OCI-LY7 (cell line): ENCODE measurements at regions of chr17 and their contacts with region 1.

Region 1: GRCh38 chr17:32142038-32142856 is at the start of gene RHOT1:
- DNase-seq: peak; percentile 90
- H3K4me3 ChIP-seq: peak within 1 kb of the TSS; percentile 92
- H3K27ac ChIP-seq: peak within 1 kb of the TSS; percentile 55
- H3K4me1 ChIP-seq: peaks cover 24% of the 10 kb centered on the region
- CTCF ChIP-seq: peak; percentile 78
- total RNA-seq, gene RHOT1: 19.4 and 23.9 TPM in 2 replicates

Region 2: DNA sequence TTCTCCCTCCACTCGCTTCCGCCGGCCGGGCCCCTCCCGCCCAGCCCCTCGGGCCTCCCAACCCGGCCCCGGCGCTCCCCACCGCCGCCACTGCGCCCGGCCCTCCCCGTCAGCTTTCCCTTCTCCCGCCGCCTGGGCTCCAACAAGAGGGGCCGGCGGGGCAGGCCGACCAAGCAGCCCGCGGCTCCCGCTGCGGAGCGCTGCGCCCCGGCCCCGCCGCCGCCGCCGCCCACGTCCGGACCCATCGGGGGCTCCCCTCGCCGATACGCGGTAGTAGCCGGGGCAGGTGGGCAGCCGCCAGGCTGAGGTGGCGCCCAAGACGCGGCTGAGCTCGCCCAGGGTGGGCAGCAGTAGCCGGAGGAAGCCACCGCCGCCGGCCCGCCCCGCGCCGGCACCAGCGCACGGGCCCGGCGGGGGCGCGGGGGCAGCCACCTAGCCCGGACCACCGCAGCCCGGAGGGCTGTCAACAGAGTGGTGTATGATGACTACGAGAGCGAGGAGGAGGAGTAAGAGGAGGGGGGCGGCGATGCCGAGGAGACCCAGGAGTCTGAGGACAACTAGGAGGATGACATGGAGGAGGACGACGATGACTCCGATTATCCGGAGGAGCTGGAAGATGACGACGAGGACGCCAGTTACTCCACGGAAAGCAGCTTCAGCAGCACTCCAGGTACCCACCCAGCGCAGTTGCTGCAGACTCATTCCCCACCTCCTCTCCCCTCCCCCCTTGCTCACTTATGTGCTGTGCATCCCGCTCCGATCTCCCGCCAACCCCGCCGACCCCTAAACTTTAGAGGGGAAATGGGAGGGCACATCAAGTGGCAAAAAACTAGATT is 134.6 kb before region 1 on chr17:
- CTCF ChIA-PET with region 1: no interaction called
- POLR2A ChIA-PET with region 1: interaction called, 3 read pairs
- intact Hi-C with region 1: loop called (anchors 1 kb)
- DNase-seq: peak; percentile 59
- H3K4me3 ChIP-seq: peak overlapping the region; percentile 98
- H3K27ac ChIP-seq: peak overlapping the region; percentile 50
- H3K4me1 ChIP-seq: peaks cover 13% of the 10 kb centered on the region
- CTCF ChIP-seq: no peak

Region 3: GRCh38 chr17:32127158-32127897 is 14.9 kb before region 1 on chr17:
- CTCF ChIA-PET with region 1: interaction called, 4 read pairs
- POLR2A ChIA-PET with region 1: interaction called, 13 read pairs
- intact Hi-C with region 1: no loop called
- DNase-seq: peak; percentile 64
- H3K4me3 ChIP-seq: peak overlapping the region; percentile 70
- H3K27ac ChIP-seq: peak overlapping the region; percentile 28
- H3K4me1 ChIP-seq: peaks cover 12% of the 10 kb centered on the region
- CTCF ChIP-seq: no peak

Region 4: GRCh38 chr17:32166150-32166549 is 23.9 kb after region 1 on chr17:
- CTCF ChIA-PET with region 1: no interaction called
- POLR2A ChIA-PET with region 1: no interaction called
- intact Hi-C with region 1: no loop called
- DNase-seq: no peak
- H3K4me3 ChIP-seq: no peak overlapping the region
- H3K27ac ChIP-seq: no peak overlapping the region
- H3K4me1 ChIP-seq: no peaks in the 10 kb centered on the region
- CTCF ChIP-seq: no peak

Region 5: GRCh38 chr17:33086041-33086440 is 943.8 kb after region 1 on chr17:
- CTCF ChIA-PET with region 1: no interaction called
- POLR2A ChIA-PET with region 1: no interaction called
- intact Hi-C with region 1: no loop called
- DNase-seq: no peak
- H3K4me3 ChIP-seq: no peak overlapping the region
- H3K27ac ChIP-seq: no peak overlapping the region
- H3K4me1 ChIP-seq: no peaks in the 10 kb centered on the region
- CTCF ChIP-seq: no peak